HepG2 (cell line): ENCODE measurements at regions of chr13 and their contacts with region 1.

Region 1: GRCh38 chr13:70310396-70311119 is 202.3 kb upstream of the KLHL1 start:
- DNase-seq: peak; percentile 58
- ATAC-seq: peak; percentile 97
- H3K4me3 ChIP-seq: no peak overlapping the region
- H3K27ac ChIP-seq: no peak overlapping the region
- H3K4me1 ChIP-seq: no peaks in the 10 kb centered on the region
- H3K27me3 ChIP-seq: no peaks in the 10 kb centered on the region
- CTCF ChIP-seq: peak; percentile 57
- EP300 ChIP-seq: no peak
- POLR2A ChIP-seq: no peak
- RAD21 ChIP-seq: no peak

Region 2: DNA sequence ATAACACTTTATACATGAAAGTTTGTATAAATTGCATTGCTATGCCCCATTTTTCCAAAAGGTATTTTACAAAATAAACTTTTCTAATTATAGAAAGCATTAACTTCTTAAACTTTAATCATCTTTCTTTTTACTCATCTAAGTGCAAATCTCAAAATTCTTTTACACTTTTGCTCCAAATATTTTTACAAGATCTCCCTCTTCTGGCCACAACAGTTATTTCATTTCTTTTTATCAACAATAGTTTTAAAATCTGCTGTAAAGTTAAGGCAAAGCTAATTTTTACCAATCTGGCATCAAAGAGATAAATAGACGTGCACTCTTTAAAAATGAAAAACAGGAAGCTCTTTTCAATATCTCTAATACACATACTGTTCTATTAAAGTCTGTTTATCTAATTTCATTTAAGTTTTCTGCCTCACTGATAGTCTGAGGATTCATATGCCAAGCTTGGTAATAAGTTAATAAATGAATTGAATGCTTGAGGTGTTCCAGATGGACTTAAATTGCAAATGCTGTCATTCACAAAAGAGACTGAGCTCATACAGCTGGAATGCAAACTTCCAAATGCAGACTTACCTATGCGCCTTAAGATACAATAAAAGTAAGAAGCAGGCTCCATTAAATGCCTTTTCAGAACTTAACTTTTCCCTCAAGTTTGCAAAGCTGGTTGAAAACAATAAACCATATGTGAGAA is 786.0 kb before region 1 on chr13:
- CTCF ChIA-PET with region 1: no interaction called
- POLR2A ChIA-PET with region 1: no interaction called
- in situ Hi-C with region 1: loop called (anchors 25 kb)
- intact Hi-C with region 1: no loop called
- DNase-seq: no peak
- ATAC-seq: no peak
- H3K4me3 ChIP-seq: no peak overlapping the region
- H3K27ac ChIP-seq: no peak overlapping the region
- H3K4me1 ChIP-seq: no peaks in the 10 kb centered on the region
- H3K27me3 ChIP-seq: no peaks in the 10 kb centered on the region; a peak in 1 of 5 replicates
- CTCF ChIP-seq: no peak
- EP300 ChIP-seq: no peak
- POLR2A ChIP-seq: no peak
- RAD21 ChIP-seq: no peak

Region 3: DNA sequence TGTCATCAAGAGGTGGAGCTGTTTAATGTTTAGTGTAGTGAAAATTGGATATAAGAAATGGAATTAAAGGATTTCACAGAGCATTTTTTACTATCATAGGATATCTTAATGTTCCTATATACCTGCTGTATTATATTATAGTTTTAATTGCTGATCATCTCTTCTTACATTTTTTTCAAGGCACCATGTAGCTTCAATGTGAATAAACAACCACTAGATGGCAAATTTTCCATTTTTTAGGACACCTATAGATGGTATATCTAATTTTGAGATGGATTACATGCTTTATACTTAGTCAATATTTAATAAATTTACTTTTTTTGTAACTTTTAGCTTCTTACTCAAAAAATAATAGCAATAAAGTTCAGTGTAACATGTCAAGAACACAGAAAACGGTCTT is 211.9 kb before region 1 on chr13:
- CTCF ChIA-PET with region 1: interaction called, 29 read pairs
- POLR2A ChIA-PET with region 1: no interaction called
- in situ Hi-C with region 1: loop called (anchors 5 kb)
- intact Hi-C with region 1: loop called (anchors 1 kb)
- DNase-seq: no peak
- ATAC-seq: peak; percentile 43; the same call in 1 of the 3 replicates
- H3K4me3 ChIP-seq: no peak overlapping the region
- H3K27ac ChIP-seq: no peak overlapping the region
- H3K4me1 ChIP-seq: no peaks in the 10 kb centered on the region
- H3K27me3 ChIP-seq: no peaks in the 10 kb centered on the region
- CTCF ChIP-seq: no peak
- EP300 ChIP-seq: no peak
- POLR2A ChIP-seq: no peak
- RAD21 ChIP-seq: no peak

Region 4: DNA sequence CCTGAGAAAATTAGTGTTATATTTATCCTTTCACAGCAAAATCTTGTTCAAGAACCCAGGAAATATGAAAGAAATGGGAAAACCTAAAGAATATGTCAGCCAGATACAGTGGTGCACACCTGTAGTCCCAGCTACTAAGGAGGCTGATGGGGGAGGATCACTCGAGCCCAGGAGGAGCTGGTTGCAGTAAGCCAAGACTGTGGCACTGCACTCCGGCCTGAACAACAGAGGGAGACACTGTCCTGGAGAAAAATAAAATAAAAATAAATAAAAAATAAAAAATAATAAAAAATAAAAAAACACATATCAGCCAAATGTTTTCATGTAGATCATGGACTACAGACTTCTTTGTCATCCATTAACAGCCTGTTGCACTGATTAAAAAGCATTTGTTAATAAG is 42.5 kb after region 1 on chr13:
- CTCF ChIA-PET with region 1: no interaction called
- POLR2A ChIA-PET with region 1: no interaction called
- in situ Hi-C with region 1: no loop called
- intact Hi-C with region 1: no loop called
- DNase-seq: no peak
- ATAC-seq: no peak
- H3K4me3 ChIP-seq: no peak overlapping the region
- H3K27ac ChIP-seq: no peak overlapping the region
- H3K4me1 ChIP-seq: no peaks in the 10 kb centered on the region
- H3K27me3 ChIP-seq: no peaks in the 10 kb centered on the region
- CTCF ChIP-seq: no peak
- EP300 ChIP-seq: no peak
- POLR2A ChIP-seq: no peak
- RAD21 ChIP-seq: no peak

Region 5: DNA sequence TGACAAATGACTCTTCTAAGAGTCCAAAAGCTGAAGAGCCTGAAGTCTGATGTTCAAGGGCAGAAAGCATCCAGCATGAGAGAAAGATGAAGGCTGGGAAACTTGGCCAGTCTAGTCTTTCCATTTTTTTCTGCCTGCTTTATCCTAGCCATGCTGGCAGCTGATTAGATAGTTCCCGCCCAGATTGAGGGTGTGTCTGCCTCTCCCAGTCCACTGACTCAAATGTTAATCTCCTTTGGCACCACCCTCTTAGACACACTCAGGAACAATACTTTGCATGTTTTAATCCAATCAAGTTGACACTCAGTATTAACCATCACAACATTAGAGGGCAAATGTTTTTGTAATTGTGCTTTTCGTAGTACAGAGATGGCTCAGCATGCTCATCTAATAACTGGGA is 65.2 kb after region 1 on chr13:
- CTCF ChIA-PET with region 1: no interaction called
- POLR2A ChIA-PET with region 1: no interaction called
- in situ Hi-C with region 1: no loop called
- intact Hi-C with region 1: no loop called
- DNase-seq: no peak
- ATAC-seq: no peak
- H3K4me3 ChIP-seq: no peak overlapping the region
- H3K27ac ChIP-seq: no peak overlapping the region
- H3K4me1 ChIP-seq: no peaks in the 10 kb centered on the region
- H3K27me3 ChIP-seq: no peaks in the 10 kb centered on the region
- CTCF ChIP-seq: no peak
- EP300 ChIP-seq: no peak
- POLR2A ChIP-seq: no peak
- RAD21 ChIP-seq: no peak